GM10248 (cell line): ENCODE measurements at regions of chr16 and their contacts with region 1.

Region 1: GRCh38 chr16:46822270-46822669 is 8.7 kb downstream of the C16orf87 start:
- DNase-seq: peak; percentile 42
- CTCF ChIP-seq: no peak

Region 2: GRCh38 chr16:46808997-46809396 is 13.3 kb before region 1 on chr16:
- CTCF ChIA-PET with region 1: interaction called, 16 read pairs
- POLR2A ChIA-PET with region 1: interaction called, 3 read pairs
- DNase-seq: no peak
- CTCF ChIP-seq: no peak

Region 3: GRCh38 chr16:46871587-46871986 is 49.3 kb after region 1 on chr16:
- CTCF ChIA-PET with region 1: no interaction called
- POLR2A ChIA-PET with region 1: no interaction called
- DNase-seq: no peak
- CTCF ChIP-seq: no peak

Region 4: GRCh38 chr16:46973207-46973995 is 151.1 kb after region 1 on chr16 and contains the start of gene DNAJA2:
- CTCF ChIA-PET with region 1: no interaction called
- POLR2A ChIA-PET with region 1: no interaction called
- DNase-seq: peak; percentile 93
- CTCF ChIP-seq: no peak